Mammary epithelial cell (primary cell): ENCODE measurements at regions of chr9 and their contacts with region 1.

Region 1: GRCh38 chr9:26955921-26956859 is at the start of gene IFT74:
- DNase-seq: peak; percentile 96
- H3K4me3 ChIP-seq: peak within 1 kb of the TSS; percentile 64 to 78 (median 69)
- H3K27ac ChIP-seq: peak within 1 kb of the TSS; percentile 88
- H3K4me1 ChIP-seq: peaks cover 4% of the 10 kb centered on the region
- H3K27me3 ChIP-seq: no peaks in the 10 kb centered on the region
- CTCF ChIP-seq: no peak
- total RNA-seq, gene IFT74: 12.3 to 19.2 TPM

Region 2: DNA sequence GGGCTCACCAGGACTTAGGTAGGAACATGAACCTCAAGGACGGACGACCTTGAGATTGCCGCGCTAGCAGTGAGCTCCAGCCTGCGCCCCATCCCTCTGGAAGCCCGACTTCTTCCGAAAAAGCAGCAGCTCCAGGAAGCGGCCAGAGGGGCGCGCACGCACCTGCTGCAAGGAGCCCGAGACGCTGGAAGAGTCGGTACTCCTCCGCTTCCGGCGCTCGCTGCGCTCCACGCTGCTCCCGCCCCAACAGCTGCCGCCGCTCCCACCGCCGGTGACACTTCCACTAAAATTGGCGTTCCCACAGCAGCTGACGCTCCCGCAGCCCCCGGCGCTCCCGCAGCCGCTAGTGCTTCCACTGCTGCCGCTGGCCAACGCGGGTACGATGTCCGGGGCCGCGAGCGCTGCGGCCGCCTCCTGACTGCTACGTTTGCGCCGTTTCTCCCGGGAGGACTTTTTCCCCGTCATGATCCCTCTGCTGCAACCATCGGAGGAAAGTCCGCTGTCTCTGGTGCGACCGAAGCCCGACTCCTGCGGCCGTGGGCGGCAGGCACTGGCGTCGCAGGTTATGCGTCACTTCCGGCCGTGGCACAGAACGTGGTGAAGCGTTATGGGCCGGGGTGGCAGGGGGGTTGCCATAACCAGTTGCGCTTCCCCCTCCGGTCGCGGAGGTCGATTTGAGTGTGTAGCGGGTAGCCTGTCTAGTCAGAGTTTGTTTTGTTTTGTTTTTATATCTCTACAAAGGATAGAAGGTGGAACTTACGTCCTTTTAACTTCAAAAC is 63.8 kb before region 1 on chr9 and contains the start of gene CAAP1:
- CTCF ChIA-PET with region 1: interaction called, 8 read pairs
- dilution Hi-C with region 1: no loop called
- in situ Hi-C with region 1: no loop called
- intact Hi-C with region 1: loop called (anchors 2 kb)
- DNase-seq: peak; percentile 85
- H3K4me3 ChIP-seq: peak within 1 kb of the TSS; percentile 94 to 99 (median 98)
- H3K27ac ChIP-seq: peak within 1 kb of the TSS; percentile 86
- H3K4me1 ChIP-seq: peaks cover 7% of the 10 kb centered on the region
- H3K27me3 ChIP-seq: no peaks in the 10 kb centered on the region
- CTCF ChIP-seq: peak; percentile 21 to 59
- total RNA-seq, gene CAAP1: 17.1 to 19.2 TPM

Region 3: GRCh38 chr9:27561685-27562084 is 605.5 kb after region 1 on chr9:
- CTCF ChIA-PET with region 1: no interaction called
- dilution Hi-C with region 1: no loop called
- in situ Hi-C with region 1: no loop called
- intact Hi-C with region 1: loop called (anchors 10 kb)
- DNase-seq: no peak
- H3K4me3 ChIP-seq: no peak overlapping the region
- H3K27ac ChIP-seq: no peak overlapping the region
- H3K4me1 ChIP-seq: no peaks in the 10 kb centered on the region
- H3K27me3 ChIP-seq: no peaks in the 10 kb centered on the region
- CTCF ChIP-seq: no peak